ENCODE measurements at regions of chr5 and their contacts with region 1.

Region 1: DNA sequence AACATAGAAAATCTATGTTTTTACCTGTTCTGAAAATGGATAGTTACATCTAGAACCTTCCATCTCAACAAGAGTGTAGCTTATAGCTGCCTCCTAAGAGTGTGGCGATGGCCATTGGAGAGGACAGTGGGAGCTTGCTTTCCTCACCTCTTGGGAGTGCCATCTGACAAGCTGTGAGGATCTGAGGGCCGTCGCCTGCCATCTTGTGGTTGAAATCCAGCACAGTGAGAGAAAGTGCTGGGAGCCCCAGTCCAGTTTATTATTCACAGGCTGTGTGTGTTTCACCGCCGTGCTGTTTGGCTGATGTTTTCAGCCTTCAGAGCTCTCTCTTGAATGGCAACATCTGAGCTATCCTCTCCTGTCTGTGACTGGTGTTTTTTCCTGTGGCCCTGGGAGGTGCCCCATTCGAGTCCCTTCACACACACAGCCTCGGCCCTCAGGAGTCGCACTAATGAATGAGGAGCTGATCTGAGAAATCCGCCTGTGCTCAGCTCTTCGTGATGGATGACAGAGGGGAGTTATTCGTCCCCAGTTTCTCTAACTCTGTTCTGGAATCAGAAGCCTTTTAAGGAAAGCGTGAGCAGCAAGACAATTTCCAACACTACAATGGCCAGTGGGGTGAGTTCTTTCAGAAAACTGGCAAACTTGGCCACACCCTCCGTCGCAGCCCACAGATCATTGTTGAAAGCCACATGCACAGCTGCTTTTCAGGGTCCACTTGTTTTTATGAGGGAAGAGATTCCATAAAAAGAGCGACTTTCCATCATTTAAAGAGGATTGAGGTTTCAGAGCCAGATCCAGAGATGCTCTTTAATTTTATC is 170.3 kb downstream of the PDZD2 start:
- DNase-seq: peak; percentile 49 to 75
- H3K4me3 ChIP-seq: no peak overlapping the region
- H3K27ac ChIP-seq: no peak overlapping the region
- H3K4me1 ChIP-seq: no peaks in the 10 kb centered on the region
- H3K27me3 ChIP-seq: no peaks in the 10 kb centered on the region
- CTCF ChIP-seq: peak; percentile 71 to 97 (median 85)
- EP300 ChIP-seq: no peak
- POLR2A ChIP-seq: no peak
- RAD21 ChIP-seq: peak; percentile 97

Region 2: DNA sequence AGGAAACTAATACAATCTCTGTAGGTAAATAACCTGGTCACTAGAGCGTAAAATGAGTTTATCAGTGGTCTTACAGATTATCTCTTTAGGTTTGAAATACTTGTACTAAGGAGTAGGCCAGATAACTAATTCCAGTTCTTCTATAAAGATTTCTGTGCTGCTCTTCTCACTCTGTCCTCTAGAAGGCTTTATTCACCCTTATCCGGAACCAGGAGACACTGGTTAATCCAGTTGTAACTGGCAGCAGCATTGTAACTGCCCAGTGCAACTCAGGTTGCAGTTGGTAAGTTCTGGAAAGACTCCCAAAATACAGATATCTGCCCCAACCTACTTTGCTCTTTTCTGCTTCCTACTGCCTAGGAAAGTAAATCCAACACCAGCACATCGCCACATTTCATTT is 257.4 kb before region 1 on chr5:
- CTCF ChIA-PET with region 1: no interaction called
- POLR2A ChIA-PET with region 1: no interaction called
- DNase-seq: no peak
- H3K4me3 ChIP-seq: no peak overlapping the region
- H3K27ac ChIP-seq: no peak overlapping the region
- H3K4me1 ChIP-seq: no peaks in the 10 kb centered on the region
- H3K27me3 ChIP-seq: no peaks in the 10 kb centered on the region
- CTCF ChIP-seq: 0 out of 4 replicates have a peak, but pooled peaks of 1 of the 3 experiments have one; percentile 1
- EP300 ChIP-seq: no peak
- POLR2A ChIP-seq: no peak
- RAD21 ChIP-seq: no peak

Region 3: GRCh38 chr5:31581498-31582099 is 227.7 kb before region 1 on chr5:
- CTCF ChIA-PET with region 1: interaction called, 16 read pairs
- POLR2A ChIA-PET with region 1: no interaction called
- DNase-seq: no peak
- H3K4me3 ChIP-seq: no peak overlapping the region
- H3K27ac ChIP-seq: no peak overlapping the region
- H3K4me1 ChIP-seq: no peaks in the 10 kb centered on the region; a peak in 1 of 7 replicates
- H3K27me3 ChIP-seq: no peaks in the 10 kb centered on the region
- CTCF ChIP-seq: peak in 1 of 3 experiments; percentile 44; a peak in 1 of 4 replicates
- EP300 ChIP-seq: no peak
- POLR2A ChIP-seq: no peak
- RAD21 ChIP-seq: peak; percentile 64 to 74

Region 4: GRCh38 chr5:31614151-31615020 is 194.9 kb before region 1 on chr5:
- CTCF ChIA-PET with region 1: interaction called, 17 read pairs
- POLR2A ChIA-PET with region 1: no interaction called
- DNase-seq: no peak
- H3K4me3 ChIP-seq: no peak overlapping the region
- H3K27ac ChIP-seq: no peak overlapping the region
- H3K4me1 ChIP-seq: peaks cover 11 to 19% (median 12%) of the 10 kb centered on the region in 4 experiments
- H3K27me3 ChIP-seq: no peaks in the 10 kb centered on the region
- CTCF ChIP-seq: peak in 1 of 3 experiments; percentile 4; a peak in 1 of 4 replicates
- EP300 ChIP-seq: no peak
- POLR2A ChIP-seq: no peak
- RAD21 ChIP-seq: no peak

Region 5: GRCh38 chr5:31664566-31664965 is 144.7 kb before region 1 on chr5:
- CTCF ChIA-PET with region 1: interaction called, 16 read pairs
- POLR2A ChIA-PET with region 1: no interaction called
- DNase-seq: peak; percentile 60 to 75
- H3K4me3 ChIP-seq: no peak overlapping the region
- H3K27ac ChIP-seq: no peak overlapping the region
- H3K4me1 ChIP-seq: no peaks in the 10 kb centered on the region
- H3K27me3 ChIP-seq: no peaks in the 10 kb centered on the region
- CTCF ChIP-seq: peak; percentile 87 to 97 (median 94)
- EP300 ChIP-seq: no peak
- POLR2A ChIP-seq: no peak
- RAD21 ChIP-seq: peak; percentile 80 to 85

Region 6: DNA sequence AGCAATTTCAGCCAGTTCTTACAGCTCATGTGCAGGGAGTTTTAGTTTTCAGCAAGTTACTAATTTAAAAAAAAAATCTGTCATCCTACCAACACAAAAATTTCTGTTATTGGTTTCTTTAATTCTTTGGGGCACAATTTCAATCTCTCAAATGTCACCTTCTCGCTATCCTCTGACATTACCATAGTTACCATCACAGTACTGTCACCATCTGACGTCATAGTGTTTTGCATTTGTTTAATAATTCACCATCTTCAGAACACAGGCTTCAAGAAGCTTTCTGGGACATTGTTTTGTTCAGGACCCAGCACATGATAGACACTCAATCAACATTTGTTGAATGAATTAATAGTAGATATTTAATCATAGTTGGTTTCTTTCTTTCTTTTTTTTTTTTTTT is 15.3 kb before region 1 on chr5:
- CTCF ChIA-PET with region 1: interaction called, 21 read pairs
- POLR2A ChIA-PET with region 1: no interaction called
- DNase-seq: no peak
- H3K4me3 ChIP-seq: no peak overlapping the region
- H3K27ac ChIP-seq: no peak overlapping the region
- H3K4me1 ChIP-seq: no peaks in the 10 kb centered on the region; a peak in 3 of 7 replicates
- H3K27me3 ChIP-seq: no peaks in the 10 kb centered on the region
- CTCF ChIP-seq: no peak
- EP300 ChIP-seq: no peak
- POLR2A ChIP-seq: no peak
- RAD21 ChIP-seq: no peak

Region 7: DNA sequence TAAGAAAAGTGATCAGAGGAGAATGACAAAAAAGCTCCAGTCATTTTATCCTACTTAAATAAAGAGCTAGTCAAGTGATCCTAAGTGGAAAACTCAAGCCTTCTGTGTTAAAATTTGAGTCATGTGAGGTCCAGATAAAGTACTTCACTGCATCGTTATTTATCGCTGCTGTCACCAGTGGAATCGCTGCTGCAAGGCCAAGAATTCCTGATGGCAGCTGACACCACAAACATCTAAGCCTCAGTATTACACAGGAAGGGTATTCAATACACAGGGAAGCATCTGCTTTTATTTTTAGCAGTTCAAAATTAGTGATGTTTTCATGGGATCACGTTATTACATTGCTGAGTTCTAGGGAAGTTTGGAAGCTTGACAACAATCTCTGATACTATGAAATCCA is 174.6 kb after region 1 on chr5:
- CTCF ChIA-PET with region 1: no interaction called
- POLR2A ChIA-PET with region 1: no interaction called
- DNase-seq: no peak
- H3K4me3 ChIP-seq: no peak overlapping the region
- H3K27ac ChIP-seq: no peak overlapping the region
- H3K4me1 ChIP-seq: peaks cover 0 to 3% (median 0%) of the 10 kb centered on the region in 4 experiments; a peak in 1 of 7 replicates
- H3K27me3 ChIP-seq: no peaks in the 10 kb centered on the region
- CTCF ChIP-seq: no peak
- EP300 ChIP-seq: no peak
- POLR2A ChIP-seq: no peak
- RAD21 ChIP-seq: no peak